ENCODE measurements at regions of chr15 and their contacts with region 1.

Region 1: DNA sequence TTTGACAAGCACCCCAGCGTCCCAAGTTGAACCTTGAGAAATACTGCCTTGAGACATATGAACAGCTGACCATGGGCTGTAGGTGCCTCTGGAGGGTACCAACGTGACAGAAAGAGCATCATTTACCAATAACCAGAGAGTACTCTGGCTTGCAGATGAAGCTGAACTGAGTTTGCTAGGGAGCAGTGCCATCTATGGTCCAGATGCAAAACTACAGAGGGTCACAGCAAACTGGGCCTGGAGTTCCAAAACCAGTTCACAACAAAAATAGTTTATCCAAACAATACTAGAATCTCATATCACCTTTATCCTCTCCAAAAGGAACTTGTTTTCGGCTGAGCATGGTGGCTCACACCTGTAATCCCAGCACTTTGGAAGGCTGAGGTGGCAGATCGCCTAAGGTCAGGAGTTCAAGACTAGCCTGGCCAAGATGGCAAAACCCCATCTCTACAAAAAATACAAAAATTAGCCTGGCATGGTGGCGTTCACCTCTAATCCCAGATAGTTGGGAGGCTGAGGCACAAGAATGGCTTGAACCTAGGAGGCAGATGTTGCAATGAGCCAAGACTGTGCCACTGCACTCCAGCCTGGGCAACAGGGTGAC is 69.3 kb downstream of the CHAC1 start:
- DNase-seq: peak; percentile 28
- ATAC-seq: peak; percentile 90
- H3K4me3 ChIP-seq: no peak overlapping the region
- H3K27ac ChIP-seq: no peak overlapping the region
- H3K4me1 ChIP-seq: no peaks in the 10 kb centered on the region
- H3K27me3 ChIP-seq: no peaks in the 10 kb centered on the region
- CTCF ChIP-seq: peak; percentile 68 to 74 (median 73)
- POLR2A ChIP-seq: no peak
- RAD21 ChIP-seq: peak; percentile 76

Region 2: GRCh38 chr15:41180206-41180789 is 157.7 kb after region 1 on chr15:
- CTCF ChIA-PET with region 1: interaction called, 3 read pairs
- POLR2A ChIA-PET with region 1: no interaction called
- RAD21 ChIA-PET with region 1: no interaction called
- intact Hi-C with region 1: loop called (anchors 10 kb)
- DNase-seq: no peak
- ATAC-seq: no peak
- H3K4me3 ChIP-seq: no peak overlapping the region
- H3K27ac ChIP-seq: no peak overlapping the region
- H3K4me1 ChIP-seq: peaks cover 2 to 8% of the 10 kb centered on the region in 2 experiments; a peak in 1 of 4 replicates
- H3K27me3 ChIP-seq: no peaks in the 10 kb centered on the region
- CTCF ChIP-seq: no peak
- POLR2A ChIP-seq: no peak
- RAD21 ChIP-seq: no peak

Region 3: DNA sequence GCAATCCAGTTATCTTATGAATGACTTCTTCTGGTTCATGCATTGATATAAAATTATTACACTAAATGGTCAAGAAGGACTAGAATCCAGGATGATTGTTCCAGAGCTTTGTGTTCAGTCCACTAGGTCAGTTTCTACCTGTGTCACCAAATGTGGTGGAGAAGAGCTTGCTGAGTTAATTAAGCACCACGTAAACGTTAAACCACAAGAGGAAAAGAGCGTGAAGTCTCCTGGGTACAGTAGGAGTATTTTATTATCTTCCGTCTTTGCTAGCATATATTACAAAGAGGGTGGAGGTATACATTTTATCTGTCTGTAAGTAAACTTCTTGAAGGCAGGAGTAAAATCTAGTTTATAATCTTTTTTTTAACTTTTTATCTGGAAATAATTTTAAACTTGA is 232.0 kb after region 1 on chr15:
- CTCF ChIA-PET with region 1: no interaction called
- POLR2A ChIA-PET with region 1: no interaction called
- RAD21 ChIA-PET with region 1: no interaction called
- intact Hi-C with region 1: no loop called
- DNase-seq: no peak
- ATAC-seq: no peak
- H3K4me3 ChIP-seq: no peak overlapping the region
- H3K27ac ChIP-seq: no peak overlapping the region
- H3K4me1 ChIP-seq: peaks cover 22 to 43% of the 10 kb centered on the region in 2 experiments
- H3K27me3 ChIP-seq: no peaks in the 10 kb centered on the region
- CTCF ChIP-seq: no peak
- POLR2A ChIP-seq: no peak
- RAD21 ChIP-seq: no peak